CD4-positive, alpha-beta T cell (primary cell): ENCODE measurements at regions of chr6 and their contacts with region 1.

Region 1: GRCh38 chr6:16700202-16700915 is 60.9 kb downstream of the ATXN1 start:
- DNase-seq: peak in 9 of 14 experiments; percentile 14 to 77 (median 27)
- ATAC-seq: peak; percentile 48
- H3K4me3 ChIP-seq: peak overlapping the region; percentile 66
- H3K4me3 Mint-ChIP-seq: peak overlapping the region; percentile 85
- H3K27ac ChIP-seq: peak overlapping the region; percentile 2 to 80
- H3K27ac Mint-ChIP-seq: peak overlapping the region; percentile 68
- H3K4me1 ChIP-seq: peaks cover 49% of the 10 kb centered on the region
- H3K4me1 Mint-ChIP-seq: peaks cover 68% of the 10 kb centered on the region
- H3K27me3 ChIP-seq: no peaks in the 10 kb centered on the region
- H3K27me3 Mint-ChIP-seq: no peaks in the 10 kb centered on the region
- CTCF ChIP-seq: no peak

Region 2: GRCh38 chr6:16657768-16658167 is 42.6 kb before region 1 on chr6:
- CTCF ChIA-PET with region 1: no interaction called
- POLR2A ChIA-PET with region 1: interaction called, 20 read pairs
- intact Hi-C with region 1: loop called (anchors 5 kb)
- DNase-seq: peak in 3 of 14 experiments; percentile 40 to 55 (median 52)
- ATAC-seq: no peak
- H3K4me3 ChIP-seq: no peak overlapping the region
- H3K4me3 Mint-ChIP-seq: peak overlapping the region; percentile 69
- H3K27ac ChIP-seq: peak overlapping the region in 1 of 2 donors; percentile 33
- H3K27ac Mint-ChIP-seq: peak overlapping the region; percentile 78
- H3K4me1 ChIP-seq: peaks cover 36% of the 10 kb centered on the region
- H3K4me1 Mint-ChIP-seq: peaks cover 66% of the 10 kb centered on the region
- H3K27me3 ChIP-seq: no peaks in the 10 kb centered on the region
- H3K27me3 Mint-ChIP-seq: no peaks in the 10 kb centered on the region
- CTCF ChIP-seq: no peak

Region 3: GRCh38 chr6:16712931-16713484 is 12.6 kb after region 1 on chr6:
- CTCF ChIA-PET with region 1: interaction called, 4 read pairs
- POLR2A ChIA-PET with region 1: interaction called, 5 read pairs
- intact Hi-C with region 1: loop called in 1 of 2 experiments (anchors 2 kb)
- DNase-seq: peak in 3 of 14 experiments; percentile 57 to 69 (median 61)
- ATAC-seq: peak; percentile 37
- H3K4me3 ChIP-seq: peak overlapping the region; percentile 36
- H3K4me3 Mint-ChIP-seq: peak overlapping the region; percentile 70
- H3K27ac ChIP-seq: peak overlapping the region; percentile 25 to 54
- H3K27ac Mint-ChIP-seq: peak overlapping the region; percentile 82
- H3K4me1 ChIP-seq: peaks cover 24% of the 10 kb centered on the region
- H3K4me1 Mint-ChIP-seq: peaks cover 32% of the 10 kb centered on the region
- H3K27me3 ChIP-seq: no peaks in the 10 kb centered on the region
- H3K27me3 Mint-ChIP-seq: no peaks in the 10 kb centered on the region
- CTCF ChIP-seq: peak; percentile 11